Activated CD8-positive, alpha-beta memory T cell treated with anti-CD3 and anti-CD28 coated beads, Interleukin-2, amount 10 ng/mL, durations not matched to agents 7 days and 5 days (primary cell): ENCODE measurements at regions of chr5 and their contacts with region 1.

Region 1: GRCh38 chr5:55072666-55073065 is 29.8 kb upstream of the GZMA start:
- DNase-seq: no peak
- ATAC-seq: peak; percentile 89
- H3K4me3 Mint-ChIP-seq: peak overlapping the region; percentile 38
- H3K27ac Mint-ChIP-seq: peak overlapping the region; percentile 97
- H3K4me1 Mint-ChIP-seq: peaks cover 52% of the 10 kb centered on the region
- H3K27me3 Mint-ChIP-seq: no peaks in the 10 kb centered on the region

Region 2: GRCh38 chr5:55062039-55062779 is 10.5 kb before region 1 on chr5:
- CTCF ChIA-PET with region 1: interaction called, 15 read pairs
- DNase-seq: peak; percentile 93
- ATAC-seq: peak; percentile 87
- H3K4me3 Mint-ChIP-seq: peak overlapping the region; percentile 64
- H3K27ac Mint-ChIP-seq: peak overlapping the region; percentile 92
- H3K4me1 Mint-ChIP-seq: peaks cover 74% of the 10 kb centered on the region
- H3K27me3 Mint-ChIP-seq: no peaks in the 10 kb centered on the region

Region 3: DNA sequence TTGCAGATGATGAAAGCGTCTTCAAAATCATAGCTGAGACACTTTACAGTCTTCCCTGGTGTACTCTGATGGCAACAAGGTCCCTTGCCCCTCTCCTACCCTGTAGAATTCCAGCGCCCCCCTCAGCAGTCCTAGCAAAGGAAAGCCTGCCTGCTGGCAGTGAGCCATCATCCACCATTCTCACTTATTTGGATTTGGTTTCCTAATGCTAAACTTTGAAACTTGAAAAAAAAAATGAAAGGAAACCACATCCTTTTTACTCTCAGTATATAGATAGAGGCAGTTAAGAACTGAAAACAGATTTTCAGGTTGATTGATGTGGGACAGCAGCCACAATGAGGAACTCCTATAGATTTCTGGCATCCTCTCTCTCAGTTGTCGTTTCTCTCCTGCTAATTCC is 29.7 kb after region 1 on chr5 and contains the start of gene GZMA:
- CTCF ChIA-PET with region 1: interaction called, 13 read pairs
- DNase-seq: peak; percentile 68
- ATAC-seq: peak; percentile 62
- H3K4me3 Mint-ChIP-seq: peak within 1 kb of the TSS; percentile 91
- H3K27ac Mint-ChIP-seq: peak within 1 kb of the TSS; percentile 97
- H3K4me1 Mint-ChIP-seq: peaks cover 73% of the 10 kb centered on the region
- H3K27me3 Mint-ChIP-seq: no peaks in the 10 kb centered on the region
- total RNA-seq, gene GZMA: 927 to 1,065 TPM